ENCODE measurements at regions of chr4 and their contacts with region 1.

Region 1: DNA sequence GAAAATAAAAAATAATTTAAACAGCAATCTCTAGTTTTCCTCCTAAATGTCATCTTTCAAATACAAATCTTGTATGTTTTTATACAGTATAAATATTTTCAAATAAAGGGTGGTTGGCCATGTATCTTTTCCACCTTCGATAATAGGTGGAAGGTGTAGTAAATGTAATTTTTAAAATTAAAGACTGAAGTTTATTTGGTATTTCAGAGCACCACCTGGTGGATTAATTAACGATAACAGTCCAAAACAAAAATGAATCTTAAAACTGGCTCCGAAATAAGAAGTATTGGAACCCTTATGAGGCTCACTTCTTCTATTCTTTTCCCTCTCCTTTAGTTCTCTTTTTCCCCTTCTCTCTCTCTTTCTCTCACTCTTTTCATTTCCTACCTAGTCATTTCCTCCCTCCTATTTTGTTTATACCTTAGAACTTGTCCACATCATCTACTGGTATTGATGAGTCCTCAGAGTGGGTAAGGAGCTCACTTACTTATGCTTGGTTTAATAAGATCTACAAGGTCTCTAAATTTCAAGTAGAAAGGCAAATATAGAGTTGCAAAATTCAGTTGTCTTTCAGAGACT is 82.9 kb upstream of the EXOC1L start:
- DNase-seq: peak in 2 of 9 experiments; percentile 5 to 13
- ATAC-seq: no peak
- H3K4me3 ChIP-seq: no peak overlapping the region
- H3K4me3 Mint-ChIP-seq: no peak overlapping the region
- H3K27ac ChIP-seq: no peak overlapping the region
- H3K27ac Mint-ChIP-seq: no peak overlapping the region
- H3K4me1 ChIP-seq: no peaks in the 10 kb centered on the region
- H3K4me1 Mint-ChIP-seq: no peaks in the 10 kb centered on the region
- H3K27me3 ChIP-seq: peaks cover 0 to 3% of the 10 kb centered on the region in 2 experiments
- H3K27me3 Mint-ChIP-seq: peaks cover 50% of the 10 kb centered on the region
- CTCF ChIP-seq: no peak

Region 2: DNA sequence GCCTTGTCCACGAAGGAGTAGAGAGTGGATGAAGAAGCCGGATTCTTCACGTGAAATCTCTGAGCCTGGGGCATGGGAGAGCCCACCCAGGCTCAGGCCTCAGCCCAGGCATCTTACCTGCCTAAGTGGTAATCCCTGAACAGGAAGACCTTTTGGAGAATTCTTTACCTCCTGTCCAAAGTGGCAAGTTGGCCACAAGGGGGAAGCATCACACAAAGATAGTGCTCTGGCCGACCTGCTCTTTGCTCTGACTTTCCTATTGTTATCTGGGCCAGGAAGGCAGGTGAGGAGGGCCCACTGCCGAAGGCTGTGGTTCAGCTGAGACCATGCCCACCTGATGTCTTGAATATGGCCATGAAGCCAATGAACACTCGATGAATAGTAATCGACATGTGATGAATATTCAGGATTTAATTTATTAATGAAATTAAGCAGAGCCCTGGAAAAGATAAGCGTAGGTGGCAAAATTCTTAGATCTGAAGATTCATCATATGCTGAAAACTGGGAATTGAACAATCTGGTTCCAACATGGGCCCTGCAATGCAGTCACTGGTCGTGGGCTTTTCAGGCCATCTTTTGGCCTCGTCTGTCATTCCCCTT is 1413.8 kb before region 1 on chr4:
- CTCF ChIA-PET with region 1: no interaction called
- POLR2A ChIA-PET with region 1: no interaction called
- intact Hi-C with region 1: loop called (anchors 5 kb)
- DNase-seq: peak in 7 of 9 experiments; percentile 3 to 58 (median 42)
- ATAC-seq: peak; percentile 40
- H3K4me3 ChIP-seq: no peak overlapping the region
- H3K4me3 Mint-ChIP-seq: no peak overlapping the region
- H3K27ac ChIP-seq: no peak overlapping the region
- H3K27ac Mint-ChIP-seq: no peak overlapping the region
- H3K4me1 ChIP-seq: no peaks in the 10 kb centered on the region
- H3K4me1 Mint-ChIP-seq: no peaks in the 10 kb centered on the region
- H3K27me3 ChIP-seq: no peaks in the 10 kb centered on the region
- H3K27me3 Mint-ChIP-seq: no peaks in the 10 kb centered on the region
- CTCF ChIP-seq: peak; percentile 39

Region 3: DNA sequence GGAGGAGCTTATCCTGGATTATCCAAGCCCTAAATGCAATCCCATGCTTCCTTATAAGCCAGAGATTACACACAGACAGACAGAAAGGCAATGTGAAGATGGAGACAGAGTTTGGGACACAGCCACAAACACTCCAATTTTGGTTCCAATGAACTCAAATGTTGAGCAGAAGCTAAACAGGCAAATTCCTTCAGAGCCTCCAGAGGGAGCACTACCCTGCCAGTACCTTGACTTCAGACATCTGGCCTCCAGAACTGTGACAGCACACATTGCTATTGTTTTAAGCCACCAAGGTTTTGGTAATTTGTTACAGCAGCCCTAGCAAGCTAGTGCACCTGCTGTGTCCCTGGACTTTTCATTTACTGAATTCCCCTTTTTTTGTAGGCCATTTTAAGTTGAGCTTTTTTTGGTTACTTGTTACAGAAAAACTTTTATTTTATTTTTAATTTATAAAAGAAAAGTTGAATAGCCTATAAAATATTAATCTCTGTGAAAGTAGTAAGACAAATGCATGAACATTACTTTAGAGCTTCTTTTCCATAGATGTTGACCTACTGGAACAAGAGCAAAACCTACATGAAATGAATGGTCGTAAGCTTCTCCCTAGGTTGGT is 424.1 kb before region 1 on chr4:
- CTCF ChIA-PET with region 1: interaction called, 3 read pairs
- POLR2A ChIA-PET with region 1: no interaction called
- intact Hi-C with region 1: loop called in 1 of 2 experiments (anchors 5 kb)
- DNase-seq: peak in 6 of 9 experiments; percentile 5 to 64 (median 33)
- ATAC-seq: peak; percentile 54
- H3K4me3 ChIP-seq: no peak overlapping the region
- H3K4me3 Mint-ChIP-seq: no peak overlapping the region
- H3K27ac ChIP-seq: no peak overlapping the region
- H3K27ac Mint-ChIP-seq: no peak overlapping the region
- H3K4me1 ChIP-seq: no peaks in the 10 kb centered on the region
- H3K4me1 Mint-ChIP-seq: no peaks in the 10 kb centered on the region
- H3K27me3 ChIP-seq: no peaks in the 10 kb centered on the region
- H3K27me3 Mint-ChIP-seq: peaks cover 3% of the 10 kb centered on the region
- CTCF ChIP-seq: peak; percentile 63

Region 4: DNA sequence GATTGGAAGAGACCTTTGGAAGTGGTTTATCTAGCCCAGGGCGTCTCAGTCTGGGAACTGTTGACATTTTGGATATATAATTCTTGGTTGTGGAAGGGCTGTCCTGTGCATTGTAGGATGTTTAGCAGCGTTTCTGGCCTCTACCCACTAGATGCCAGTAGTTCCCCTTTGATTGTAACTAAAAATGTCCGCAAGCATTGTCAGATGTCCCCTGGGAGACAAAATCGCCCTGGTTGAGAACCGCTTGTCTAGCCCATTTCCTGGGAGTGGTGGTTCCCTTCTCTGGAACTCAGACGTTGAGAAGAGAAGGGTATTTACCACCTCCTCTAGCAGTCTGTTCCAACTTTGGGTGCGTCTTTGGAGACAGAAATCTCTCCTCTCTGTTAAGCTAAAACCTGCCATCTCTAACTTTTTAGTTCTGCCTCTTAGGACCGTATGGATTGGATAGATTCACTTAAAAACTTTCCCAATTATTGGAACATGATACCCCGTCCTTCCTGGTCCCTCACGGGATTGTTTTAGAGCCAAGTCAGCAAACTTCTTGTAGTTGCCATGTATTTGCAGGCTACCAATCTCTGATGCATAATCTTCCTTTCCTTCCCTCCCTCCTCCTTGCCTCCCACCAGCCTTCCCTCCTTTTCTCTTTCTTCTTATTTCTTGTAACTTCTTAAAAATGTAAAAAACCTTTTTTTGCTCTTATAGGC is 327.1 kb before region 1 on chr4:
- CTCF ChIA-PET with region 1: no interaction called
- POLR2A ChIA-PET with region 1: no interaction called
- intact Hi-C with region 1: no loop called
- DNase-seq: peak in 2 of 9 experiments; percentile 15 to 31
- ATAC-seq: no peak
- H3K4me3 ChIP-seq: no peak overlapping the region
- H3K4me3 Mint-ChIP-seq: no peak overlapping the region
- H3K27ac ChIP-seq: no peak overlapping the region
- H3K27ac Mint-ChIP-seq: no peak overlapping the region
- H3K4me1 ChIP-seq: peaks cover 3% of the 10 kb centered on the region
- H3K4me1 Mint-ChIP-seq: peaks cover 46% of the 10 kb centered on the region
- H3K27me3 ChIP-seq: no peaks in the 10 kb centered on the region
- H3K27me3 Mint-ChIP-seq: no peaks in the 10 kb centered on the region
- CTCF ChIP-seq: no peak

Measured in CD8-positive, alpha-beta T cell (primary cell).